ENCODE measurements at regions of chr22 and their contacts with region 1.

Region 1: GRCh38 chr22:50016988-50017700 is 4.6 kb upstream of the IL17REL start:
- DNase-seq: no peak
- H3K4me3 Mint-ChIP-seq: peak overlapping the region; percentile 28
- H3K27ac Mint-ChIP-seq: peak overlapping the region; percentile 65
- H3K4me1 Mint-ChIP-seq: peaks cover 25% of the 10 kb centered on the region
- H3K27me3 Mint-ChIP-seq: peaks cover 11% of the 10 kb centered on the region

Region 2: DNA sequence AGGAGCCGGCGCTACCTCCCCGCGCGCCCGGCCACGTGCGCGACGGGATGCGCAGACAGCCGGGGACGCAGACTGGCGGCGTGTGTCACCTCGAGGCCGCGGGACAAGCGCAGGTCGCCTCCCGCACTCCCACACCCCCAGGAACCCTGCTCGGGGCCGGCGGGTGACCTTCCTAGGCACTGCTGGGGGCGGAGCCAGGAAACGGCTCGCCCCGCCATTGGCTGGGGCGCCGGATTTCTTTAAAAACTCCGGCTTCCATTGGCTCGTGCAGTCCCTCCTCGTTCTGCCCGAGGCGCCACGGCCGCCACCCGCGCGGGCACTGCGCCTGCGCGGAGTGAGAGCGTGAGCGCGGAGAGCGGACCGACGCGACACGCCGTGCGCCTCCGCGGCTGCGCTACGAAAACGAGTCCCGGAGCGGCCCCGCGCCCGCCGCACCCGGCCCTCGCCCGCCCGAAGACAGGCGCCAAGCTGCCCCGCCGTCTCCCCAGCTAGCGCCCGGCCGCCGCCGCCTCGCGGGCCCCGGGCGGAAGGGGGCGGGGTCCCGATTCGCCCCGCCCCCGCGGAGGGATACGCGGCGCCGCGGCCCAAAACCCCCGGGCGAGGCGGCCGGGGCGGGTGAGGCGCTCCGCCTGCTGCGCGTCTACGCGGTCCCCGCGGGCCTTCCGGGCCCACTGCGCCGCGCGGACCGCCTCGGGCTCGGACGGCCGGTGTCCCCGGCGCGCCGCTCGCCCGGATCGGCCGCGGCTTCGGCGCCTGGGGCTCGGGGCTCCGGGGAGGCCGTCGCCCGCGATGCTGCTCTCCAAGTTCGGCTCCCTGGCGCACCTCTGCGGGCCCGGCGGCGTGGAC is 56.8 kb before region 1 on chr22 and contains the start of gene PIM3:
- intact Hi-C with region 1: loop called (anchors 1 kb)
- DNase-seq: peak; percentile 98
- H3K4me3 Mint-ChIP-seq: peak within 1 kb of the TSS; percentile 94
- H3K27ac Mint-ChIP-seq: peak within 1 kb of the TSS; percentile 95
- H3K4me1 Mint-ChIP-seq: peaks cover 17% of the 10 kb centered on the region
- H3K27me3 Mint-ChIP-seq: no peaks in the 10 kb centered on the region
- total RNA-seq, gene PIM3: 302 and 304 TPM in 2 replicates

Region 3: DNA sequence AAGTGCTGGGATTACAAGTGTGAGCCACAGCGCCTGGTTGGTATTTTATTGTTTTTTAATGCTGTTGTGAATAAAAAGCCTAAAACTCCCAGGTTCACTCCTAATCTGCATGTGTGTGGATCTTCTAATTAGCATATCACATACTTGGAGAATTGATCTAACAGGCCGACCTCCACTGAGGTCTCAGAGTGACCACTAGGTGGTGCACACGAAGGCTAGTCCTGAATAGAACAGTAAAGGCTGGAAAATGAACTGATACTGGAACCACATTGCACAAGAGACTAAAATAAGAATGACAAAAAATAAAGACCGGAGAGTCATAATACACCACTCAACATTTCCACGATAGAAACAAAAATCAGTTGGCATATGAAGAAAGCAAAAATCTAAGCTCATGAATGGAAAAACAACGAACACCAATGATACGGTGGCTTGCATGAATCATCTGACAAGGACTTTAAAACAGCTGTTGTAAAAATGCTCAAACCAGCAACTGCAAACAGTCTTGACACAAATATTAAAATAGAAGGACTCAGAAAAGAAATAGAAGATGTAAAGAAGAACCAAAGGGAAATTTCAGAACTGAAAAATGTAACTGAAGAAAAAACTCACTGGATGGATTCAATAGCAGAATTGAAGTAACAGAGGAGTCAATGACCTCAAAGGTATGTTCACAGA is 37.4 kb before region 1 on chr22:
- intact Hi-C with region 1: loop called (anchors 2 kb)
- DNase-seq: peak; percentile 69
- H3K4me3 Mint-ChIP-seq: peak overlapping the region; percentile 11
- H3K27ac Mint-ChIP-seq: peak overlapping the region; percentile 73
- H3K4me1 Mint-ChIP-seq: peaks cover 29% of the 10 kb centered on the region
- H3K27me3 Mint-ChIP-seq: peaks cover 8% of the 10 kb centered on the region

Region 4: DNA sequence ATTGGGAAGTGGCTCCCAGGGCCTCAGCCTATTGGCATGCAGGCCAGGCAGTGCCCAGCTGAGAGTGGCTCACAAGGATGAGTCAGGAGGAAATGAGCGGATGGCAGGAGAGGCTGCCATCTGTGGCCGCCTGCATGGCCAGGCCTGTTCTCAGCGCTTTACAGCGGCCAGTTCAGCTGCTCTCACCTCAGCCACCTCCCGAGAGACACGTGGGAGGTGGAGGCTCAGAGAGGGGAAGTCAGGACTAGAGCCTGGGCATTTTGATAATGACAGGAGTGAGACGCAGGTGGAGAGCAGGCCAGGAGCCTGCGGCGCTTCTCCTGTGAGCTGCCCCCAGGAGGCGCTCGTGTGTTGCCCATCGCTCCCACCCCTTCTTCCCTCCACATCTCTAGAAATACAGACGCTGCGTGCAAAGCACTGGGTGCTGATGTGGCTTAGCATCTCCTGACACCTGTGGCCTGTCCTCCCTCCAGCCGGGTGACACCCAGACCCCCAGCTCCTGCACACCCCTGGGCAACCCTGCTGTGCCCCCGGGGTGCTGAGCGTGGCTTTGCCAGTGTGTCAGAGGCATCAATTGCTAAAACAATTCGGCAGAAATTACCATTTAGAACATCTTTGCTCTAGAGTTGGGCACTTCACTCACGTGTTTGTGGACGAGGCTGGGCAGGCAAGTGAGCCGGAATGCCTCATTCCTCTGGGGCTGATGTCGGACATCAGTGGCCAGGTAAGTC is 132.0 kb after region 1 on chr22:
- intact Hi-C with region 1: no loop called
- DNase-seq: peak; percentile 91
- H3K4me3 Mint-ChIP-seq: no peak overlapping the region
- H3K27ac Mint-ChIP-seq: no peak overlapping the region
- H3K4me1 Mint-ChIP-seq: peaks cover 2% of the 10 kb centered on the region
- H3K27me3 Mint-ChIP-seq: no peaks in the 10 kb centered on the region

Region 5: GRCh38 chr22:50185384-50186087 is 168.4 kb after region 1 on chr22 and contains the start of gene TRABD:
- intact Hi-C with region 1: no loop called
- DNase-seq: peak; percentile 96
- H3K4me3 Mint-ChIP-seq: peak within 1 kb of the TSS; percentile 96
- H3K27ac Mint-ChIP-seq: peak within 1 kb of the TSS; percentile 92
- H3K4me1 Mint-ChIP-seq: peaks cover 19% of the 10 kb centered on the region
- H3K27me3 Mint-ChIP-seq: peaks cover 2% of the 10 kb centered on the region
- total RNA-seq, gene TRABD: 94.4 and 97.4 TPM in 2 replicates

Measured in activated CD4-positive, alpha-beta T cell treated with anti-CD3 and anti-CD28 coated beads, Interleukin-2, amount 10 ng/mL, durations not matched to agents 24 days and 14 days (primary cell).